ENCODE measurements at regions of chr15 and their contacts with region 1.

Region 1: DNA sequence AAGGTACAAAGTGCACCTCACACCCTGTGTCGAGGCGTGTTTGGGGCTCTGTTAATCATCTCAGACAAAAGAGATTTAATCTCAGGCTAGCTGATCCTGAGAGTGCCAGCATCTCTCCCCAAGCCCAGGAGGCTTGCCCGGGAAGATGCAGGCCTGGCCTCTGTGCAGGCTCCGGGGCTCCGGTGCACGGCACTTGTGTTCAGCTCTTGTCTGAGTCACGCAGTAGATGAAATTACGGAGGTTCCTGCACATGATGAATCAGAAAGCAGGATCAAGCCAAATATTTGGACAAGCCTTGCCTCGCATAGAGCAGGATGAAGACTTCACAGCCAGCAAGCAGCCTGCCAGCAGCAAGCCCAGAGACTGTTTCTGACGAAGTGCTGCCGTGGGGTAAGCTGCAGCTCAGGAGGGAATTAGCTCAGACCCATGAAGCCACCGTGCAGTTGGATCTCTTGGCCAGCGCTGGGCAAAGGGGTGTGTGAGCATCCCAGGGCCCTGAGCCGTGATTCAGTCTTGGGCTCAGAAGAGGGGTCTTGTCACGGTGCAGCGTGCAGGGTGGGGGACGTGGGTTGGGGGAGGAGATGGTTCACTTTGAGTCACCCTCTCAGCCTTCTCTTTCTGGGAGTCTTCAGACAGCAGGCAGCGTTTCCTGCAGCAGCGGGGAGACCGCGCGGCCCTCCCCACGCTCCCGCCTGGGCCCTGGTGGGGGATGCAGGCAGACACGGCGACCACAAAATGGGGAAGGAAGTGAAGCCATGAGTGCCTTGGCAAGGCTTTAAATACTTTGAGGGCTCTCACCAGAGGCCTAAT is 89.2 kb upstream of the MEF2A start:
- DNase-seq: peak; percentile 64 to 94
- H3K4me3 ChIP-seq: no peak overlapping the region
- H3K27ac ChIP-seq: peak overlapping the region; percentile 86 to 88
- H3K4me1 ChIP-seq: peaks cover 16 to 22% of the 10 kb centered on the region in 2 donors
- H3K27me3 ChIP-seq: no peaks in the 10 kb centered on the region
- CTCF ChIP-seq: no peak

Region 2: DNA sequence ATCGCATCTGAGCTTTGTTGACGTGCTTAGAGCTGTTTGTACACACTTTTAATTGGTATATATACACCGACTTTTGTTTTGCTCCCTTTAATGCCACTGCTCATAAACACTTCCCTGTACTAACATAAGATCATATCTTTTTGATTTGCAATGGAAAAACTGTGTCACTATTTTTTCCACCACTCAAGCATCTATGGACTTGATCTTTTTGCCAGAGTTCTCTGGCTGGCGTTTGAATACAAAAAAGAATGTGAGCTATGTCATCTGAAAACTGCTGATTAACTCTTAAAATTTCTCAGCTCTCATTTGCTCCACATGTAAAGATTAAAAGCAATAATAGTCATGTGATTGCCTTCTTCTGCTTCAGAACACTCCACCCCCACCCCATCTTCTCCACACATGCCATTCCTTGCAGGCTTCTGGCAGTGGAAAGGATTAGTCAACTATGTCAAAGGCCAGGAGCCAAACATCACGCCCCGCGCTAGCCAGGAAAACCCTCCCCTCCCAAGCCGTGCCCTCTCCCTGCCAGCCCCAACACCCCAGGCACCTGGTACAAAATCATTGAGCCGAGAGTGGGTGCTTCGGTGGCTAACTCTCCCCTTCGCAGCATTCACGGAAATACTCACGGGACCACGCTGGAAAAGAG is 34.2 kb before region 1 on chr15:
- intact Hi-C with region 1: loop called (anchors 5 kb)
- DNase-seq: peak in 1 of 2 donors; percentile 91
- H3K4me3 ChIP-seq: peak overlapping the region in 1 of 2 donors; percentile 37
- H3K27ac ChIP-seq: peak overlapping the region; percentile 85 to 93
- H3K4me1 ChIP-seq: peaks cover 16 to 37% of the 10 kb centered on the region in 2 donors
- H3K27me3 ChIP-seq: no peaks in the 10 kb centered on the region
- CTCF ChIP-seq: no peak

Region 3: DNA sequence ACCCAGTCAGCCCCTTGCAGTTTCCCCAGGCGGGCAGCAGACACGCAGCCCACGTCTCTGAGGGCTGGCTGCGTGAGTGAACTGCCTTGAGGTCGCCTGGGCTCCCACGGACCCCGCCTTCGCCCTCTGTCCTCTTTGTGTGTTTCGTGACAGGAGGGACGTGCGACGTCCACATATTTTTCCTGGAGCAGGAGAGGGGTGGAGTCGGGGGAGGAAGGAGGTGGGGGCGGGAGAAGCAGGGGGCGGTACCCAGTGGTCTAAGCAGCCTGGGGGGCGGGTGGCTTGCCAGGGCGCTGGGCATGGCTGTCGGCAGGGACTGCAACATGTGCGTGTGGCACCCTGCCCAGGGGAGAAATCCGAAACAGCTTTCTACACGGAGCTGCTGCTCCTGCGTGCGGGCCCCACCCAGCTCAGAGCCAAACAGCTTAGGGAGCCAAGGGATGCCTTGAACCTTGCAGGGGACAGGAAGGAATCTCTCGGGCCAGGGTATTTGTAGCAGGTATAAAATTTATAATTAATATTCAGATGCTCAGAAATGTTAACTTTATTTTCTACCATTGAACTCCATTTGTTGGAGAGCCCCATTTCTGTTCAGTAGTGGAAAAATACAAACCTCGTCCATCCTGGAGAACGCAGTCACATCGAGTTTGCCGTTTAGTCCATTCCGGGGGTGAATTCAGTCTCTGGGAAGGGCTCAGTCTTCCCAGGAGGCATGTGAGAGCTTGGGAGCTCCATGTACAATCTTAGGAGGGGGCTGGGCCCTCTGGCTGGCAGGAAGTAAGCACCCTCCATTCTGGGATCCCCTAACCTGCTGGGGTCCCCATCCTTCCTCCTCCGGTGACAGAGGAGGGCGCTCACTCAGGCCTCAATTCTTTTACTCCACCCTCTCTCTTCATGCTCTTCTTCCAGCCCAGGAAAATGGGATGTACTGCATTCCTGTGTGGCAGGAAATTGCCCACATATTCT is 10.0 kb after region 1 on chr15:
- intact Hi-C with region 1: no loop called
- DNase-seq: peak; percentile 46 to 89
- H3K4me3 ChIP-seq: peak overlapping the region; percentile 40 to 62
- H3K27ac ChIP-seq: peak overlapping the region; percentile 67 to 74
- H3K4me1 ChIP-seq: peaks cover 4 to 13% of the 10 kb centered on the region in 2 donors
- H3K27me3 ChIP-seq: no peaks in the 10 kb centered on the region
- CTCF ChIP-seq: no peak

Region 4: GRCh38 chr15:99507504-99508310 is 31.1 kb after region 1 on chr15:
- intact Hi-C with region 1: loop called (anchors 2 kb)
- DNase-seq: peak in 1 of 2 donors; percentile 87
- H3K4me3 ChIP-seq: peak overlapping the region; percentile 22 to 50
- H3K27ac ChIP-seq: peak overlapping the region; percentile 82 to 84
- H3K4me1 ChIP-seq: peaks cover 5 to 32% of the 10 kb centered on the region in 2 donors
- H3K27me3 ChIP-seq: no peaks in the 10 kb centered on the region
- CTCF ChIP-seq: no peak

Region 5: DNA sequence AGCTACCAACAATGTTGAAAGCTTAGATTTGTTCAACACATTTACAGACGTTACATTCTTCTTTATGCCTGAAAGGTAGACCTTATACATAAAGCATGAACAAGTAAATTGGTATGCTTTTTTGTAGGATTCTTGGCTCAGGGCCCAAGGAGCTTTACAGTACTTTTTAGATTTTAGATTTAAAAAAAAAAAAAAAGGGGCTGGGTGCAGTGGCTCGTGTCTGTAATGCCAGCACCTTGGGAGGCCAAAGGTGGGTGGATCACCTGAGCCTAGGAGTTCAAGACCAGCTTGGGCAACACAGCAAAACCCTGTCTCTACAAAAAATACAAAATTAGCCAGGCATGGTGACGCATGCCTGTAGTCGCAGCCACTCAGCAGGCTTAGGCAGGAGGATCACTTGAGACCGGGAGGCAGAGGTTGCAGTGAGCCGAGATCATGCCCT is 128.9 kb after region 1 on chr15:
- intact Hi-C with region 1: no loop called
- DNase-seq: no peak
- H3K4me3 ChIP-seq: no peak overlapping the region
- H3K27ac ChIP-seq: peak overlapping the region; percentile 32 to 40
- H3K4me1 ChIP-seq: peaks cover 0 to 10% of the 10 kb centered on the region in 2 donors
- H3K27me3 ChIP-seq: no peaks in the 10 kb centered on the region
- CTCF ChIP-seq: no peak